B cell (primary cell): ENCODE measurements at regions of chr3 and their contacts with region 1.

Region 1: DNA sequence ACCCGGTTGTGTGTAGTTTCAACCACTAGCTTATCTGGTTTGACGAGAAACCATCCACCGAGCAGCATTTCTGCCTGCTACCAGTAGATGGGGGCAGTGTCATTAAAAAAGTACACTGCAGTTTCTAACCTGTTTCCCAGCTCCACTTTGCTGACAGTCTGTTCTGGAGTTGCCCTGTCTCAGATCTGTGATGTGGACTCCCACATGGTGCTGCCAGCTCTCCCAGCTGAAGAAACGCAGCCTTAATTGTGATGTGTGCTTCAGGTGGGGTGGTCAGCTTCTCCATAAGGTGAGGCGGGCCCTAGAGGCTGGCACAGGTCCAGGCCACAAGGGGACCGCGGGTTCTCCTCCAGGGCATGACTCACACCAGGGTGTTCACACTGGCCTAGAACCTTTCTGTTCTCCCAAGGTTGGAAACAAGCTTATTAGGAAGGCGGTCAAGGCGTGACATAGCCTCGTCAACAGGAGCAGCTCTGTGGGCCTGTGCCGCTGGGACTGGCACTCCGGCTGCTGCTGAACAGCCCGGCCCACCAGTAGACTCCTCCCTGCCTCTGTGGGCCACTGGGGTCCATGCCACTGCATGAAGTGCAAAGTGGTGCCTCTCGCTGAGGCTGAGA is 2.9 kb upstream of the FAM43A start:
- DNase-seq: peak; percentile 87
- ATAC-seq: peak; percentile 37
- H3K4me3 ChIP-seq: no peak overlapping the region
- H3K4me3 Mint-ChIP-seq: peak overlapping the region; percentile 23
- H3K27ac ChIP-seq: no peak overlapping the region
- H3K27ac Mint-ChIP-seq: peak overlapping the region; percentile 26
- H3K4me1 ChIP-seq: peaks cover 15 to 29% of the 10 kb centered on the region in 2 donors
- H3K4me1 Mint-ChIP-seq: peaks cover 43% of the 10 kb centered on the region
- H3K27me3 ChIP-seq: no peaks in the 10 kb centered on the region
- H3K27me3 Mint-ChIP-seq: no peaks in the 10 kb centered on the region
- CTCF ChIP-seq: peak; percentile 90

Region 2: GRCh38 chr3:194472290-194472920 is 210.4 kb before region 1 on chr3:
- CTCF ChIA-PET with region 1: interaction called, 10 read pairs
- POLR2A ChIA-PET with region 1: no interaction called
- intact Hi-C with region 1: no loop called
- DNase-seq: peak; percentile 71
- ATAC-seq: peak; percentile 90
- H3K4me3 ChIP-seq: no peak overlapping the region
- H3K4me3 Mint-ChIP-seq: no peak overlapping the region
- H3K27ac ChIP-seq: no peak overlapping the region
- H3K27ac Mint-ChIP-seq: no peak overlapping the region
- H3K4me1 ChIP-seq: no peaks in the 10 kb centered on the region
- H3K4me1 Mint-ChIP-seq: peaks cover 9% of the 10 kb centered on the region
- H3K27me3 ChIP-seq: no peaks in the 10 kb centered on the region
- H3K27me3 Mint-ChIP-seq: no peaks in the 10 kb centered on the region
- CTCF ChIP-seq: peak; percentile 99

Region 3: DNA sequence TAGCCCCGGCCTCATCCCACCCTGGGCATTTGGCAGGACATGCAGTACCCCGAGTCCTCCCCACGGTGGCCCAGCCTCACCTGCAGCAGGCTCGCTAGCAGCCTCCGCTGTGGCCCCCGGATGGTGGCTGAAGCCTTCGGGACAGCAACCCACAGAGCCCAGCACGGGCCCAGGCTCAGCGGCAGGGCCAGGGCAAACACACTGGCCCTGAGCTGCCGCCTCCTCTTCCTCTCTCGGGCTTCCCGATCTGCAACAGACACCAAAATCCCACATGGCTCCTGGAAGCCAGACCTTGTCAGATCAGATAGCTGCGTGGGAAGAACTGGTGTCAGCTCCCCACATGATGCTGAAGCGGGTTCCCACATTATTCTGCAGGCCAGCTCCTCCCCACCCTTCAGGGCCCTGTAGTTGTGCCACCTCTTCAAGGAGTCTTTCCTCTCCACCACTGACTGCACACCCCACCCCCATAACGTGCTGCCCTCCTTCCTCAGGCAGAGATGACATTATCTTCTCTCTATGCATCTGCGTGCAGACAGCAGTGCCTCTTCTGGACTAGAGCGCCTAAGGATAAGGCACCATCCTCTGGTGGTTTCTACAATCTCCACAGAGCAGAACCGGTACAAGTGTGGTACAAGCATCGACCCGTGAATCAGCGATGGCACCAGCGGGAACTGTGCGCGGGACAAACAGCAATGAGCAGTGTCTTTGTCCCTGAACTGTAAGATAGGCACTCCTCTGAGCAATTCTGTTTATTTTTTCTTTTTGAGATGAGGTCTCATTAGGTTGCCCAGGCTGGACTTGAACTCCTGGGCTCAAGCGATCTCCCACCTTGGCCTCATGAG is 59.1 kb before region 1 on chr3:
- CTCF ChIA-PET with region 1: no interaction called
- POLR2A ChIA-PET with region 1: no interaction called
- intact Hi-C with region 1: no loop called
- DNase-seq: no peak
- ATAC-seq: no peak
- H3K4me3 ChIP-seq: no peak overlapping the region
- H3K4me3 Mint-ChIP-seq: no peak overlapping the region
- H3K27ac ChIP-seq: no peak overlapping the region
- H3K27ac Mint-ChIP-seq: no peak overlapping the region
- H3K4me1 ChIP-seq: no peaks in the 10 kb centered on the region
- H3K4me1 Mint-ChIP-seq: no peaks in the 10 kb centered on the region
- H3K27me3 ChIP-seq: no peaks in the 10 kb centered on the region
- H3K27me3 Mint-ChIP-seq: no peaks in the 10 kb centered on the region
- CTCF ChIP-seq: no peak

Region 4: DNA sequence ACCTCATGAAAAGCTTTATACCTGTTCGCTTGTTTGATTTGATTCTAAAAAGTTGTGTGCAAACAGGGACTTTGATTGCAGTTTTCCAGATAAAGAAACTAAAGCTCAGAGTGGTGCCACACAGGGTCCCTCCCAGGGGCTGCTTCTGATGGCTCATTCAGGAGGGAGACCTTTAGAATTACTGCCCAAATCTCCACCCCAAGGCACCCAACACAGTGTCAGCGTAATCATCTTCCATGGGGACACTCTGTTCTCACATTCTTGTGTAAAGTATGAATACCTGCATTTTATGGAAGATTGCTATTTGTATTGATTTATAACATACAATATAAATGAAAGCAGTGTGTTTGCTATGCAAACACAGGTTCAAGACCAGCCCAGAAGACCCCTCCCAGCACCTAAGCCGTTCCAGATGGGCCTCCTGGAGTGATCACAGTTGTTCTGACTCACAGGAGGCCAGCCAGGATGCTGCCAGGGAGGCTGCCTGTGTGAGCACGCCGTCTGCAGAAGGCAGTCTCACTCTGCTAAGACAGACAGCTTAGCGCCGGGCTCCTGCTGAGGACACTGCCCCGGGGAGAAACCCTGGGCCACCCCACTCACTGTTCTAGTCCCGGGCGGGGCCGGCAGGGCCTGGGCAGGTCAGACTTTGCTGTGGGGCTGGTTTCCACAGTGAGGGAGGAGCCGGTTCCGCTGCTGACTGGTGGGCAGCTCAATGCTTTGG is 188.5 kb after region 1 on chr3:
- CTCF ChIA-PET with region 1: interaction called, 5 read pairs
- POLR2A ChIA-PET with region 1: interaction called, 3 read pairs
- intact Hi-C with region 1: loop called (anchors 10 kb)
- DNase-seq: peak; percentile 40
- ATAC-seq: peak; percentile 75
- H3K4me3 ChIP-seq: peak overlapping the region in 1 of 5 experiments; percentile 2
- H3K4me3 Mint-ChIP-seq: peak overlapping the region; percentile 68
- H3K27ac ChIP-seq: peak overlapping the region in 1 of 2 donors; percentile 27
- H3K27ac Mint-ChIP-seq: no peak overlapping the region
- H3K4me1 ChIP-seq: peaks cover 12 to 20% of the 10 kb centered on the region in 2 donors
- H3K4me1 Mint-ChIP-seq: peaks cover 24% of the 10 kb centered on the region
- H3K27me3 ChIP-seq: no peaks in the 10 kb centered on the region
- H3K27me3 Mint-ChIP-seq: peaks cover 23% of the 10 kb centered on the region
- CTCF ChIP-seq: no peak

Region 5: GRCh38 chr3:195001961-195002861 is 319.4 kb after region 1 on chr3:
- CTCF ChIA-PET with region 1: interaction called, 36 read pairs
- POLR2A ChIA-PET with region 1: no interaction called
- intact Hi-C with region 1: loop called (anchors 1 kb)
- DNase-seq: peak; percentile 64
- ATAC-seq: peak; percentile 85
- H3K4me3 ChIP-seq: no peak overlapping the region
- H3K4me3 Mint-ChIP-seq: no peak overlapping the region
- H3K27ac ChIP-seq: no peak overlapping the region
- H3K27ac Mint-ChIP-seq: no peak overlapping the region
- H3K4me1 ChIP-seq: peaks cover 15 to 30% of the 10 kb centered on the region in 2 donors
- H3K4me1 Mint-ChIP-seq: peaks cover 31% of the 10 kb centered on the region
- H3K27me3 ChIP-seq: no peaks in the 10 kb centered on the region
- H3K27me3 Mint-ChIP-seq: no peaks in the 10 kb centered on the region
- CTCF ChIP-seq: peak; percentile 66

Region 6: GRCh38 chr3:195133462-195133861 is 450.7 kb after region 1 on chr3:
- CTCF ChIA-PET with region 1: interaction called, 7 read pairs
- POLR2A ChIA-PET with region 1: interaction called, 3 read pairs
- intact Hi-C with region 1: loop called (anchors 1 kb)
- DNase-seq: peak; percentile 66
- ATAC-seq: no peak
- H3K4me3 ChIP-seq: no peak overlapping the region
- H3K4me3 Mint-ChIP-seq: peak overlapping the region; percentile 37
- H3K27ac ChIP-seq: no peak overlapping the region
- H3K27ac Mint-ChIP-seq: peak overlapping the region; percentile 60
- H3K4me1 ChIP-seq: peaks cover 16 to 22% of the 10 kb centered on the region in 2 donors
- H3K4me1 Mint-ChIP-seq: peaks cover 37% of the 10 kb centered on the region
- H3K27me3 ChIP-seq: no peaks in the 10 kb centered on the region
- H3K27me3 Mint-ChIP-seq: no peaks in the 10 kb centered on the region
- CTCF ChIP-seq: no peak

Region 7: GRCh38 chr3:195250473-195251251 is 567.9 kb after region 1 on chr3:
- CTCF ChIA-PET with region 1: interaction called, 26 read pairs
- POLR2A ChIA-PET with region 1: no interaction called
- intact Hi-C with region 1: no loop called
- DNase-seq: peak; percentile 31
- ATAC-seq: peak; percentile 73
- H3K4me3 ChIP-seq: no peak overlapping the region
- H3K4me3 Mint-ChIP-seq: no peak overlapping the region
- H3K27ac ChIP-seq: no peak overlapping the region
- H3K27ac Mint-ChIP-seq: peak overlapping the region; percentile 0
- H3K4me1 ChIP-seq: peaks cover 8 to 11% of the 10 kb centered on the region in 2 donors
- H3K4me1 Mint-ChIP-seq: peaks cover 19% of the 10 kb centered on the region
- H3K27me3 ChIP-seq: no peaks in the 10 kb centered on the region
- H3K27me3 Mint-ChIP-seq: no peaks in the 10 kb centered on the region
- CTCF ChIP-seq: no peak

Region 8: GRCh38 chr3:195558602-195559001 is 875.8 kb after region 1 on chr3:
- CTCF ChIA-PET with region 1: no interaction called
- POLR2A ChIA-PET with region 1: no interaction called
- intact Hi-C with region 1: no loop called
- DNase-seq: peak; percentile 64
- ATAC-seq: peak; percentile 62
- H3K4me3 ChIP-seq: no peak overlapping the region
- H3K4me3 Mint-ChIP-seq: no peak overlapping the region
- H3K27ac ChIP-seq: no peak overlapping the region
- H3K27ac Mint-ChIP-seq: peak overlapping the region; percentile 3
- H3K4me1 ChIP-seq: no peaks in the 10 kb centered on the region
- H3K4me1 Mint-ChIP-seq: peaks cover 7% of the 10 kb centered on the region
- H3K27me3 ChIP-seq: no peaks in the 10 kb centered on the region
- H3K27me3 Mint-ChIP-seq: no peaks in the 10 kb centered on the region
- CTCF ChIP-seq: peak; percentile 33